CD8-positive, alpha-beta memory T cell (primary cell): ENCODE measurements at regions of chr7 and their contacts with region 1.

Region 1: DNA sequence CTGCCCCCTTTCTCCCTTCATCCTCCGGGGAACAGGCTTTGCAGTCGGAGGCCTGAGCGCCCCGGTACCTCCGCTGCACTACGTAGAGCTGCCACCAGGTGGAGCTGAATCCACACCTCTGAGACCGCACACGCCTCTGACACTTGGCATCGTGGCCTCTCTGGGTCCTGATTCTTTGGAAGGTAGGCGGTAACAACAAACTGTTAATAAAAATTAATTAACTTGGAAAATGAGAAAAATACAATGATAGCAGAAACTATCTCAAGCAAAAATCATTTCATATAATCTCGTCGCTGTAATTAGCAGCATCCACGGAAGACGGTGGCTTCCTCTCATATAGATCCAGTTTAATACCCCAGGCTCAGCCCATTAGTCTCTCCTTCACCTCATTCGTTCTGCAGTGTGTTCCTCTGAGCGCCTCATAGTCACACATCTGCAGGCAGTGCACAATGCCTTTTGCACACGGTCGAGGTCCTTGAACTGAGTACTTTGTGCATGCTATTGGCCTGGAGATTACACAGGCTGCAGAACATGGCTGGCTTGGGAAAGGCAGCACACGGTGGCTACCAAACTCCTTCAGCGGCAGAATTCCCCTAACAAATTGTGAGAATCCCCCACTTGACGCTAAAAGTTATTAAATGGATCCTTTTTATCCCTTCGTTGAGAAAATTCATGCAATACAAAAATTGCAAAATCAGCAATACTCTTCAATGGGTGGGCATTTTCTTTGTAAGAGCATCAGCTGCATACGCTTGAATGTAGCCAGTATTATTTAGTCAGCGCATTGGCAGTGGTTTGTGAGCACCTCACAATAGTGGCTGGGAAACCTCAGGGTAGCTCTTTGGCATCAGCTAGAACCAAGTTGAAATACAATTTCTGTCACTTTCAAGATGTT is 18.7 kb downstream of the OR9A2 start:
- DNase-seq: peak; percentile 66 to 85 (median 69)
- H3K4me3 ChIP-seq: no peak overlapping the region
- H3K4me3 Mint-ChIP-seq: no peak overlapping the region
- H3K27ac ChIP-seq: no peak overlapping the region
- H3K27ac Mint-ChIP-seq: peak overlapping the region in 1 of 8 donors; percentile 8
- H3K4me1 ChIP-seq: peaks cover 1% of the 10 kb centered on the region
- H3K4me1 Mint-ChIP-seq: peaks cover 6 to 9% (median 7%) of the 10 kb centered on the region in 3 donors
- H3K27me3 ChIP-seq: peaks cover 6% of the 10 kb centered on the region
- H3K27me3 Mint-ChIP-seq: peaks cover 4 to 14% of the 10 kb centered on the region in 2 donors

Region 2: GRCh38 chr7:142535123-142535779 is 473.0 kb before region 1 on chr7:
- CTCF ChIA-PET with region 1: interaction called, 10 read pairs
- POLR2A ChIA-PET with region 1: no interaction called
- DNase-seq: peak; percentile 28 to 78 (median 46)
- H3K4me3 ChIP-seq: peak overlapping the region; percentile 19
- H3K4me3 Mint-ChIP-seq: peak overlapping the region; percentile 48 to 78 (median 61)
- H3K27ac ChIP-seq: no peak overlapping the region
- H3K27ac Mint-ChIP-seq: peak overlapping the region in 6 of 8 donors; percentile 17 to 89 (median 52)
- H3K4me1 ChIP-seq: peaks cover 9% of the 10 kb centered on the region
- H3K4me1 Mint-ChIP-seq: peaks cover 11 to 23% (median 22%) of the 10 kb centered on the region in 3 donors
- H3K27me3 ChIP-seq: no peaks in the 10 kb centered on the region
- H3K27me3 Mint-ChIP-seq: no peaks in the 10 kb centered on the region

Region 3: DNA sequence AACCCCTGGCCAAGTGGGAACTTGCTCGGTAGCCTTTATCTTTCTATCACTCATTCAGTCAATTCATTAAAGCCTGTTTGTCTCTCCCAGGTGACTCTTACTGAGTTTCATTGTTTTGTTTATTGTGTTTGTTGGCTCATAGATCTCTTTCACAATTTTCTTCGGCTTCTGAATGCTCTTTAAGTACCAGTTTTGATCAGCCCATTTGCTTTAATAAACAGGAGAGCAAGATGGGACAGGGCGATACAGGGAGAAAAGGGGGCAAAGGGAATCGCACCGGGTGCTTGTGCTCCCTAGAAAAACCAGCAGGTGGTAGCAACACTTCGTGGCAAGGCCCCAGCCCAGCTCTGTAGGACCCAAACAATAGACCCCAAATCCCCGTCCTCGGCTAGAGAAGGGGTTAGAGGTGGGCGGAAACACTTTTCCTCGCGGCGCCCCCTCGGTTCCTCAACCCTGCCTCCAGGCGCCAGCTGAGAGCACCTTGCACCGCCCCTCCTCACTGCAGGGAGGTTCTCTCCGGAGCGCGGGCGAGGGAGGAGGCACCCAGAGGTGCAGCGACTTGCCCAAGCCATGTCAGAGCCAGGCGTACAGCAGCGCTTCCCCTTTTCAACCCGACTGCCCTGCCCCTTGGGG is 154.4 kb before region 1 on chr7:
- CTCF ChIA-PET with region 1: interaction called, 17 read pairs
- POLR2A ChIA-PET with region 1: no interaction called
- DNase-seq: peak; percentile 47 to 77 (median 59)
- H3K4me3 ChIP-seq: peak overlapping the region; percentile 70
- H3K4me3 Mint-ChIP-seq: peak overlapping the region; percentile 90 to 98 (median 96)
- H3K27ac ChIP-seq: peak overlapping the region; percentile 56
- H3K27ac Mint-ChIP-seq: peak overlapping the region; percentile 48 to 90 (median 88)
- H3K4me1 ChIP-seq: peaks cover 21% of the 10 kb centered on the region
- H3K4me1 Mint-ChIP-seq: peaks cover 10 to 27% (median 15%) of the 10 kb centered on the region in 3 donors
- H3K27me3 ChIP-seq: no peaks in the 10 kb centered on the region
- H3K27me3 Mint-ChIP-seq: peaks cover 3 to 12% of the 10 kb centered on the region in 2 donors

Region 4: GRCh38 chr7:142992464-142992863 is 15.8 kb before region 1 on chr7:
- CTCF ChIA-PET with region 1: interaction called, 18 read pairs
- POLR2A ChIA-PET with region 1: no interaction called
- DNase-seq: no peak
- H3K4me3 ChIP-seq: no peak overlapping the region
- H3K4me3 Mint-ChIP-seq: peak overlapping the region in 1 of 7 donors; percentile 16
- H3K27ac ChIP-seq: no peak overlapping the region
- H3K27ac Mint-ChIP-seq: no peak overlapping the region
- H3K4me1 ChIP-seq: no peaks in the 10 kb centered on the region
- H3K4me1 Mint-ChIP-seq: no peaks in the 10 kb centered on the region
- H3K27me3 ChIP-seq: no peaks in the 10 kb centered on the region
- H3K27me3 Mint-ChIP-seq: peaks cover 8 to 47% of the 10 kb centered on the region in 2 donors

Region 5: DNA sequence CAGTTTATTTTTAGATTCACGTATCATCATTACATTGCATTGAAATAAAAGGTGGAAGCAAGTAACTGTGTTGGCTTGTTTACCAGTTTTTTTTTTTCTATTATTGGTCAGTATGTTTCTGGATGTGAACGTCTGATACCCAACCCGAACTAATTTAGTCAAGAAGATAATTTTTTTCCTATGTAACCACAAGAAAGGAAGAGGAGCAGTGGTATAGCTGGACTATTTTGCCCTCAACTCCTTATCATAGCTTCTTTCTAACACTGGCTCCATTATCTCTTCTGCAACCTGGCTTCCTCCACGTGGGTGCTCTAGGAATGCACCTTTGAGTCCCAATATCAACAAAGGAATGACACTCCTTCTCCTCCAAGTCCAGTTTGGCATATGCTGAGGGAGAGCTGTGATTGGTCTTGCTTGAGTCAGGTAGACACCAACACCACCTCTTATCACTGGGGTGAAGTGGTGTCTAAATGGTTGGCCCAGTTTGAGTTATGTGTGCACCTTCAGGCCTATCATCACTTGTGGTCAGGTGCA is 10.7 kb before region 1 on chr7:
- CTCF ChIA-PET with region 1: interaction called, 18 read pairs
- POLR2A ChIA-PET with region 1: no interaction called
- DNase-seq: no peak
- H3K4me3 ChIP-seq: no peak overlapping the region
- H3K4me3 Mint-ChIP-seq: no peak overlapping the region
- H3K27ac ChIP-seq: no peak overlapping the region
- H3K27ac Mint-ChIP-seq: peak overlapping the region in 1 of 8 donors; percentile 1
- H3K4me1 ChIP-seq: no peaks in the 10 kb centered on the region
- H3K4me1 Mint-ChIP-seq: no peaks in the 10 kb centered on the region
- H3K27me3 ChIP-seq: no peaks in the 10 kb centered on the region
- H3K27me3 Mint-ChIP-seq: peaks cover 6 to 18% of the 10 kb centered on the region in 2 donors